ENCODE measurements at regions of chr5 and their contacts with region 1.

Region 1: DNA sequence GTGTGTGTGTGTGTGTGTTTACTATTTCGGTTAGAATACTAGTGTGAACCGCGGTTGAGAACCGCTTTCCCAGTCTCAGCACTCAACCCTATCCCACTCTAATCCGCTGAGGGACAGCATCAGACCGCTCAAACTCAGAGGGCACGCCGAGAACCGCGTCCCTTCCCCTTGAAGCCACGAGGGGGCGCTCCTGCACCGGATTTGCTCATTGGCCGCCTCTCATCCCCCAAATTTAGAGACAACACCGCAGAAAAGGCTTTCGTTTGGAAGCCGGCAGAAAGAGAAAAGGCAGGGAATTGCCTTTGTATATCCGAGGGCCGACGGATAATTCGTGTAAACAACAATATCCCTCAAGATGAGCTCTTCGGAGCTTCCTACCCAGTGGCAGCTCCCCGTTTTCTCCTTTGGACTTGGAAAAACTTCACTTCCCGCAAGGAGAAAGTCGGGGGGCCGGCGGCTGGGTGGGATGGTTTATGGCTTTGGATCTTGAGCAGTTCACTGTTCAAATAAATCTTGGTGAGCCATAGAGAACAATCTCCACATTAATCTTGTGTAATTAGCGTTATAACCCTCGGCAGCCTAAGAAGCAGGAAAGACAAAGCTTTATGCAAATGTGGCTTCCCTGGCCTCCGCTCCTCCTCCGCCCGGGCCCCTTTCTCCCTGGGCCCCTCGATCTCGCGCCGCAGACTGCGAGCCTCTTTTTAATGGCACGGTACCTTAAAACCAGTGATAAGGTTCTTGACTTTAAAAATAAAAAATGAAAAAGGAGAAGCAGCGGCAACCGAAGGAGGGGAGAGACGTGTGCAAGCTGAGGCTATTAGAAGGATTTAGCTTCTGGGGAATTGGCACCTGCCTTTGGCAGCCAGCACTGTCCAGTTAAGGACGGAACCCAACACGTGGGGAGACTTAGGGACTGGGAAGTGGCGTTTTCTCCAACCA is 296.8 kb downstream of the PARP8 start:
- DNase-seq: peak; percentile 77
- H3K4me3 Mint-ChIP-seq: peak overlapping the region; percentile 74
- H3K27ac Mint-ChIP-seq: no peak overlapping the region
- H3K4me1 Mint-ChIP-seq: peaks cover under 1% of the 10 kb centered on the region
- H3K27me3 Mint-ChIP-seq: peaks cover 78% of the 10 kb centered on the region
- CTCF ChIP-seq: peak; percentile 98

Region 2: DNA sequence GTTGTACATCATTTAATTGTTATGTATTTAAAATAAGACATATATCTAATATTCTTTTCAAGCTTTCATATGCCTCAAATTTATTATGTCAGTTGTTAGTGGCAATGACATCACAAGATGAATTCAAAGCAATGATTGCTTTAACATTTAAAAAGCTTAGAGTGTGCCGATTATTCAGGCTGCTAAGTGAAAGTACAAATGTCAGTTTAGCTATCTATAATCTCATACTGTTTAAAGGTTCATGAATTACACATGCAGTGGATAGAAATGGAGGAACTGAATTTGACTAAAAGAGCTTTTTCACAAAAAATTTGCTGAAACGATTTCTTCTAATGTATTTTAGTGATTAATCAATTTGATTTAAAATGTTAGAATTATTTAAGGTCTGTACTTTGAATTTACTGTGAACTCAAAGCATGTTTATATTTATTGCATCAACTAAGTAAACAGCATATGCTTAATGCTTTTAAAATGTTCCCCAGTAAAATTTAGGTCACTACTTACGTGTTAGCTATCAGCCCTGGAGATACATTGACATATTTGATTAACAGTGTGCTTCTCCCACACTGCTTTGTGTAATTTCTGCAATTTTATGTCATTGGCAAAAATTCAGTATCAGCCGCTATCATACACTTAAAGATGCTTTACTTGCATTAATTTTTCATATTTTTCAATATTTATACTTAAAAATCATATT is 38.2 kb after region 1 on chr5:
- CTCF ChIA-PET with region 1: interaction called, 12 read pairs
- POLR2A ChIA-PET with region 1: no interaction called
- intact Hi-C with region 1: no loop called
- DNase-seq: no peak
- H3K4me3 Mint-ChIP-seq: no peak overlapping the region
- H3K27ac Mint-ChIP-seq: no peak overlapping the region
- H3K4me1 Mint-ChIP-seq: no peaks in the 10 kb centered on the region
- H3K27me3 Mint-ChIP-seq: peaks cover 81% of the 10 kb centered on the region
- CTCF ChIP-seq: no peak

Region 3: GRCh38 chr5:51392283-51392682 is 429.1 kb after region 1 on chr5:
- CTCF ChIA-PET with region 1: interaction called, 10 read pairs
- POLR2A ChIA-PET with region 1: no interaction called
- intact Hi-C with region 1: no loop called
- DNase-seq: no peak
- H3K4me3 Mint-ChIP-seq: no peak overlapping the region
- H3K27ac Mint-ChIP-seq: no peak overlapping the region
- H3K4me1 Mint-ChIP-seq: peaks cover 35% of the 10 kb centered on the region
- H3K27me3 Mint-ChIP-seq: no peaks in the 10 kb centered on the region
- CTCF ChIP-seq: no peak

Region 4: GRCh38 chr5:51829691-51830090 is 866.5 kb after region 1 on chr5:
- CTCF ChIA-PET with region 1: no interaction called
- POLR2A ChIA-PET with region 1: no interaction called
- intact Hi-C with region 1: no loop called
- DNase-seq: peak; percentile 55
- H3K4me3 Mint-ChIP-seq: peak overlapping the region; percentile 46
- H3K27ac Mint-ChIP-seq: peak overlapping the region; percentile 72
- H3K4me1 Mint-ChIP-seq: peaks cover 23% of the 10 kb centered on the region
- H3K27me3 Mint-ChIP-seq: no peaks in the 10 kb centered on the region
- CTCF ChIP-seq: no peak

Region 5: GRCh38 chr5:51960617-51961115 is 997.5 kb after region 1 on chr5:
- CTCF ChIA-PET with region 1: interaction called, 26 read pairs
- POLR2A ChIA-PET with region 1: no interaction called
- intact Hi-C with region 1: loop called (anchors 1 kb)
- DNase-seq: peak; percentile 17
- H3K4me3 Mint-ChIP-seq: no peak overlapping the region
- H3K27ac Mint-ChIP-seq: no peak overlapping the region
- H3K4me1 Mint-ChIP-seq: no peaks in the 10 kb centered on the region
- H3K27me3 Mint-ChIP-seq: no peaks in the 10 kb centered on the region
- CTCF ChIP-seq: peak; percentile 38

Region 6: DNA sequence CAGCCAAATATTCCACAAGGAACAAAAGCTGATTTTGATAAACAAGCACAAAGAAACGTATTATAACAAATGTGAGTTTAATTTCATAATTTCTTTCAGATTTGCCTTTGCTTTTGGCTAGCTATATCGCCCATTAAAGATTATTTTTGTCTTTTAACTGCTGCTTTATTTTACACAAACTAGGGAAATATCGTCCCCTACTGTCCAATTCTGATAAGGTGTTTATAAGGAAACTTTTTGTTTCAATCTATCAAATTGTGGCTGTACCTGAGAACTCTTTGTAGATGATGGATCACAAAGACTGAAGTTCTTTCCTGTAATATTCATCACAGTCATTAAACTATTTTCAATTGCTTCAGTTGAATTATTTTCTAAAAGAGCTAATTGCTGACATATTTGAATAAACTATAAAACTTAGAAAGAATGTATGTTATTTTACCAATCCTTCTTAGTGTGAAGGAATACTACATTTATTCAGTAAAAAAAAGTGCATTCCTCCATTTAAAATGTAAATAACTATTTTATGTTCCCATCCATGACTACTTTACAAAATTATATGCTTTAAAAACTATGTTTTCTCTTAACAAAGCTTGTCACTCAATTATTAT is 1393.2 kb after region 1 on chr5:
- CTCF ChIA-PET with region 1: interaction called, 5 read pairs
- POLR2A ChIA-PET with region 1: no interaction called
- intact Hi-C with region 1: loop called (anchors 1 kb)
- DNase-seq: peak; percentile 31
- H3K4me3 Mint-ChIP-seq: no peak overlapping the region
- H3K27ac Mint-ChIP-seq: no peak overlapping the region
- H3K4me1 Mint-ChIP-seq: no peaks in the 10 kb centered on the region
- H3K27me3 Mint-ChIP-seq: peaks cover 49% of the 10 kb centered on the region
- CTCF ChIP-seq: peak; percentile 72

Measured in MCF 10A (cell line).